ENCODE measurements at regions of chr19 and their contacts with region 1.

Region 1: DNA sequence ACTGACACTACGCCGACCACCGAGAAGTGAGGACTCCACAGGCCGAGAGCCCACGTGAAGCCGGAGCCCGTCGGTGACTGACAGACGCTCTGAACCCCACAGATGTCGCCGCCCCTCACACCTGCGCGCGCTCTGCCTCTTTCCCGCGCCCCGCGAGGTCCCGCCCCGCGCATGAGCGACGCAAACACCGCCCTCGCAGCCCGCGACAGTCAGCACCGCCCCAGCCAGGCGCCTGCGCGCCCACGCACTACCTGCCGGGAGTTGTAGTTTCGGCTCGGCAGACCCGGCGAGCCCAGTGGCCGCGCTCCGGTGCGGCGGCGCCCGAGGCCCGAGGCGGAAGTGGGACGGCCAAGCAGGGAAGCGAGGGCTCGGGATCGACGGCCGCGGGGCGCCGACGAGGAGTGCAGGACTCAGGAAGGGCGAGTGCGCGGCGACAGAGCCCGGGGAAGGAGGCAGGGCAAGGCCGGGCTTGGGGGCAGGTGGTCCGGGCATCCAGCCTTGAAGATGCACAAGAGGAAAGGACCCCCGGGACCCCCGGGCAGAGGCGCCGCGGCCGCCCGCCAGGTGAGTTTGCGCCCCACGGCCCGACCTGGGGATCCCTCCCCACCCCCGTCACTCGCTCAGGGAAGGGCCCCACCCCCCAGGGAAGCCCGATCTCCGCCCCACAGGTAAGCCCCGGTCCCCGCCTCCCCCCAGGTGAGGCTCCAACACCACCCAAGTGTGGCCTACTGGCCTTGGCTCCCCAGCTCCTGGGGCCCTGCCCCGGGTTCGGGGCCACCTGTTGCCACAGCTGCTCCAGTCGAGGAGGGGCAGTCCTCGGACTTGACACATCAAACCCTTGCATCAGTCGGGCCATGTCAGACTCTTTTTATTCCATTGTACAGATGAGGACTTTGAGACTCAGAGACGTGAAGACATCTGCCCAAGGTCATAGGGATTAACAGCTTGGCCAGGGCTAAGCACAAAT is at the starts of genes BRME1 and CC2D1A:
- DNase-seq: peak; percentile 97
- ATAC-seq: peak; percentile 99
- H3K4me3 Mint-ChIP-seq: peak within 1 kb of the TSS; percentile 83
- H3K27ac Mint-ChIP-seq: peak within 1 kb of the TSS; percentile 89
- H3K4me1 Mint-ChIP-seq: peaks cover 36% of the 10 kb centered on the region
- H3K27me3 Mint-ChIP-seq: no peaks in the 10 kb centered on the region
- total RNA-seq, gene BRME1: 4.2 to 5.0 TPM
- total RNA-seq, gene CC2D1A: 27.8 to 28.9 TPM

Region 2: DNA sequence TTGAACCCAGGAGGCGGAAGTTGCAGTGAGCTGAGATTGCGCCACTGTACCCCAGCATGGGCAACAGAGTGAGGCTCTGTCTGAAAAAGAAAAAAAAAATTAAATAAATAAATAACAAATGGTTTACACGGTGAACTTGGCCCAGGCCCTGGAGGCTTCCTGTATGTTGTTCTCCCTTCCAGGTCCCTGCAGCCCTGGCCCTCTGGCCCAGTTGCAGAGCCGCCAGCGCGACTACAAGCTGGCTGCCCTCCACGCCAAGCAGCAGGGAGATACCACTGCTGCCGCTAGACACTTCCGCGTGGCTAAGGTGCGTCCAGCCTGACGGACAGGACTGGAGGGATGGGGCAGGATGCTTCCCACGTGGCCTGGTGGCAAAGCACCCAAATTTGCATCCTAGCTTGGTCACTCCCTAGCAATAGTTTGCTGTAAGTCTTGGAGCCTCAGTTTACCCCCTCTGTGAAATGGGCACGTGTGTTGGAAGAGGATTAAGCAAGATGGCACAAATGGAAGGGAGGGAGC is 11.7 kb after region 1 on chr19:
- CTCF ChIA-PET with region 1: interaction called, 3 read pairs
- POLR2A ChIA-PET with region 1: interaction called, 10 read pairs
- DNase-seq: no peak
- ATAC-seq: no peak
- H3K4me3 Mint-ChIP-seq: no peak overlapping the region
- H3K27ac Mint-ChIP-seq: no peak overlapping the region
- H3K4me1 Mint-ChIP-seq: peaks cover 4% of the 10 kb centered on the region
- H3K27me3 Mint-ChIP-seq: no peaks in the 10 kb centered on the region

Region 3: GRCh38 chr19:13978734-13979586 is 72.7 kb after region 1 on chr19:
- CTCF ChIA-PET with region 1: no interaction called
- POLR2A ChIA-PET with region 1: no interaction called
- DNase-seq: no peak
- ATAC-seq: no peak
- H3K4me3 Mint-ChIP-seq: peak overlapping the region; percentile 8
- H3K27ac Mint-ChIP-seq: peak overlapping the region; percentile 43
- H3K4me1 Mint-ChIP-seq: peaks cover 58% of the 10 kb centered on the region
- H3K27me3 Mint-ChIP-seq: no peaks in the 10 kb centered on the region

Region 4: GRCh38 chr19:14048443-14049153 is 142.4 kb after region 1 on chr19:
- CTCF ChIA-PET with region 1: interaction called, 10 read pairs
- POLR2A ChIA-PET with region 1: no interaction called
- DNase-seq: peak; percentile 78
- ATAC-seq: peak; percentile 71
- H3K4me3 Mint-ChIP-seq: no peak overlapping the region
- H3K27ac Mint-ChIP-seq: no peak overlapping the region
- H3K4me1 Mint-ChIP-seq: peaks cover 7% of the 10 kb centered on the region
- H3K27me3 Mint-ChIP-seq: no peaks in the 10 kb centered on the region

Region 5: GRCh38 chr19:14117668-14118164 is 211.5 kb after region 1 on chr19 and contains the start of gene PRKACA:
- CTCF ChIA-PET with region 1: no interaction called
- POLR2A ChIA-PET with region 1: no interaction called
- DNase-seq: peak; percentile 99
- ATAC-seq: peak; percentile 98
- H3K4me3 Mint-ChIP-seq: peak within 1 kb of the TSS; percentile 89
- H3K27ac Mint-ChIP-seq: peak within 1 kb of the TSS; percentile 76
- H3K4me1 Mint-ChIP-seq: peaks cover 52% of the 10 kb centered on the region
- H3K27me3 Mint-ChIP-seq: no peaks in the 10 kb centered on the region
- total RNA-seq, gene PRKACA: 69.2 to 72.4 TPM